ENCODE measurements at regions of chr4 and their contacts with region 1.

Region 1: DNA sequence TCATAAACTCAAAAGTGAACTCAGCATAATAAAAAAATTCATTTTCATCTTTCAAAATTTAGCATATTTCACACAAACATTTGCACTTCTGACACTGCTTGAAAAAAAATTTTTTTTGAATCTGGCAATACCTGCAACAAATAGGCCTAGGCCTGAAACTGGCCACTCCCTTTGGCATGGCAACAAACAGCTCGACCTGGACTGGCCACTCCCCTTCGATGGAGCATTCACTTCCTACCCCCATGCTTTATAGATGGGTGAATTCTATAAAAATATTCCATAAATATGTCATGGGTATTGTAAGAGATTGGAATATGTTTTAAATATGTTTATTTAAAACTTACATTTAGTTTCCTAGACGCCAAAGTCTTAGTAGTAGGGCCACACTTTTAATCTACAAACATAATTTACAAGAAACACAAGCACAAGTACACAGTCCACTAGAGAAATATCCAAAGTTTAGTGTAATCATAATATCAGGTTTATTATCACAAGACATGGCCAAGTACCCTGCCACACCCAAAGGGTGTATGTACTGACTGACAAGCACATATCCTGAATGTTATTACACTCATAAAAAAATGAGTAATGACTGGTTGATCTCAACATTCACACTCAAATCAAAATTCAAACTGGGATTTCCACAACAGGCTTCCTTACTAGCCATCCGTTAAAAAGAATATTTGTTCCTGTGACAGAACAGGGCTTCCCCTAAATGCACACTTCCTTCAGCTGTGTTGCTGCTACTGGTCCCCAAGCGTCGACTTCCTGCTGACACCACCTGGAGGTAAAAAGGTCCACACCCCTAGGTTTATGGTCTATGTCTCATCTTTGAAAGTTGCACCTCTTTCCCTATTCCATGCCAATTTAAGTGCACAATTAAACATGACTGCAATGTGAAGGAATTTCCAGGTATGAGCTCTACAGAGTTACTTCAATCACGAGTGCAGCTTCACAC is 271.5 kb downstream of the NR3C2 start:
- DNase-seq: peak; percentile 69
- ATAC-seq: peak; percentile 84
- H3K4me3 ChIP-seq: no peak overlapping the region; the same call in 1 of the 2 replicates
- H3K27ac ChIP-seq: peak overlapping the region; percentile 87
- H3K4me1 ChIP-seq: peaks cover 22% of the 10 kb centered on the region
- H3K27me3 ChIP-seq: no peaks in the 10 kb centered on the region
- CTCF ChIP-seq: no peak

Region 2: GRCh38 chr4:148007303-148007702 is 163.4 kb before region 1 on chr4:
- CTCF ChIA-PET with region 1: no interaction called
- POLR2A ChIA-PET with region 1: no interaction called
- intact Hi-C with region 1: loop called (anchors 2 kb)
- DNase-seq: peak; percentile 95
- ATAC-seq: peak; percentile 96
- H3K4me3 ChIP-seq: peak overlapping the region; percentile 55
- H3K27ac ChIP-seq: peak overlapping the region; percentile 93
- H3K4me1 ChIP-seq: peaks cover 20% of the 10 kb centered on the region
- H3K27me3 ChIP-seq: no peaks in the 10 kb centered on the region
- CTCF ChIP-seq: no peak

Region 3: GRCh38 chr4:148255344-148255720 is 84.6 kb after region 1 on chr4:
- CTCF ChIA-PET with region 1: no interaction called
- POLR2A ChIA-PET with region 1: no interaction called
- intact Hi-C with region 1: loop called (anchors 1 kb)
- DNase-seq: no peak
- ATAC-seq: peak; percentile 64
- H3K4me3 ChIP-seq: no peak overlapping the region
- H3K27ac ChIP-seq: peak overlapping the region; percentile 17
- H3K4me1 ChIP-seq: peaks cover 6% of the 10 kb centered on the region; the same call in 1 of the 2 replicates
- H3K27me3 ChIP-seq: no peaks in the 10 kb centered on the region
- CTCF ChIP-seq: no peak

Measured in PC-3 (cell line).